ENCODE measurements at regions of chr10 and their contacts with region 1.

Region 1: GRCh38 chr10:124106241-124106879 is 13.0 kb upstream of the CHST15 start:
- DNase-seq: peak; percentile 97
- H3K4me3 Mint-ChIP-seq: peak overlapping the region; percentile 70
- H3K27ac Mint-ChIP-seq: peak overlapping the region; percentile 99
- H3K4me1 Mint-ChIP-seq: peaks cover 40% of the 10 kb centered on the region
- H3K27me3 Mint-ChIP-seq: no peaks in the 10 kb centered on the region
- CTCF ChIP-seq: no peak

Region 2: DNA sequence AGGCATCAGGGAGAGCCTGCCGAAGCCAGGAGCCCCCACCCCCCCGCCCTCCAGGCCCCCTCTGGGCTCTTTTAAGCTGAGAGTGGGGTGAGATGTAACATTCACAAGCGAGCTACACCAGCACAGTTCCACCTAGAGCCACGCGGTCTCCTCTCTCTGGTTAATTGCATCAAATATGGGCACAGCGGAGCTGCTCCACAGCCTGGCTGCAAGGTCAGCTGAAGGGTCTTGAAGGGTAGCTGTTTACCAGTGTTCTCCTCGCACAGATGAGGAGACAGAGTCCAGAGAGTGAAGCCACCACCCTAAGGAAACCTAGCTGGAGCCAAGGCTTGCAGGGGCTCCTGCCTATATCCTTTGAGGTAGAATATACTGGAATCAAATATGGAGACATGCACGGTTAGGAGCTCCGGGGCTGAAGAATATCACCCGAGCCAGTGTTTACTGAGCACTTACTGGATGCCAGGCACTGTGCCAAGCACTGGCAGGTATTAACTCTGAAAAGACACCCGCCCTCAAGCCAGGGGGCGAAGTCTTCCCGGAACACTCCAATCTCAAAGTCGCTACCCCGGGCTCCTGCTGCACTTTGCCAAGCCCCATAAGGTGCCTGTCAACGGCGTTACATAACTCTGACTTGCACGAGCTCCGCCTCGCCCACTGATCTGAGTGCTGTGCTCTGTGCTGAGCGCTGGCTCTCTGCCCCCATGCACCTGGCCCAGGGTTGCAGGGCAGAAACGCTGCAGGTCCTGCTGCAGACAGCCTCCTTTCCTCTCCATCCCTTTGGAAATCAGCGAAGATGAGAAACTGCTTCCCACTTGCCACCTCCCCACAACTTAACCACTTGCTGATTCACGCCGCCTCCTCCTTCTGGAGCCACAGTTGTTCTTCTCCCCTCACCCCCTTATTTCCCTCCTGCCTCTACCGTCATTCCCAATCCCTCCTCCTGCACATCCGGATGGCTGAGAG is 18.4 kb before region 1 on chr10:
- CTCF ChIA-PET with region 1: interaction called, 4 read pairs
- POLR2A ChIA-PET with region 1: interaction called, 96 read pairs
- intact Hi-C with region 1: no loop called
- DNase-seq: peak; percentile 82
- H3K4me3 Mint-ChIP-seq: no peak overlapping the region
- H3K27ac Mint-ChIP-seq: no peak overlapping the region
- H3K4me1 Mint-ChIP-seq: peaks cover 25% of the 10 kb centered on the region
- H3K27me3 Mint-ChIP-seq: no peaks in the 10 kb centered on the region
- CTCF ChIP-seq: no peak

Region 3: DNA sequence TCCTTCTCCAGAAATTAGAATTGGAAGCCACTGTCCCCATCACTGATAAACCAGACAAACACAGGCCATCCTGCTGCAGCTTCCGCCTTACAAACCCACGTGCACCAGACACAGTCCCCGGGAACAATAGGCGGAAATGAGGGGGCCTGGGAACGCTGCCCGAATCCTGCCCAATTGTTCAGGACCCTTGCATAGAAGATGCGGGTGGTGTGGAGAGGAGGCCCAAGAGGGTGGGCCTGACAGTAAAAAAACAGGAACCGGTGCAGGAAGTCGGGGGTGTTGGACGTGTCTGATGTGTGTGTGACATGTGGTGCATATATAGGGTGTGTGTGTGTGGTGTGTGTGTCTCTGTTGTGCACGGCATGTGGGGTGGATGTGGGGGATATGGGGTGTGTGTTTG is 13.6 kb after region 1 on chr10:
- CTCF ChIA-PET with region 1: interaction called, 9 read pairs
- POLR2A ChIA-PET with region 1: interaction called, 26 read pairs
- intact Hi-C with region 1: no loop called
- DNase-seq: no peak
- H3K4me3 Mint-ChIP-seq: no peak overlapping the region
- H3K27ac Mint-ChIP-seq: no peak overlapping the region
- H3K4me1 Mint-ChIP-seq: peaks cover 11% of the 10 kb centered on the region
- H3K27me3 Mint-ChIP-seq: no peaks in the 10 kb centered on the region
- CTCF ChIP-seq: no peak